ENCODE measurements at regions of chr6 and their contacts with region 1.

Region 1: DNA sequence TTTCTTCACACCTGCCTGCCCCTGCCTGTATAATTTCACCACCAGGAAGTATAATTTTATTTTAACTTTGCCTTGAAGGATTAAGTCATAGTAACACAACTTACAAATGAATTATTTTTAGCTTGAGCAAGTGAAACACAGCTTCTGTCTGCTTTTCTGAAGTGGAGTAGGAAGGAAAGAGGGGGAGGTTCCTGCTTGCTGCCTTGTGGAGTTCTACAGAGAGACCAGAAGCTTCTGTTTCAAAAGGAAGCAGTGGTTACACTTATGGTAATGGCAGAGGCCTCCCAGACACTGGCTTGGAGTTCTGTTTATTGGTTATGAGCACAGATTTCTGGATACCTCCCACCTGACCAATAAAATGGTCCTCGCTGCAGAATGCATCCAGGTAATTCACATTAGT is 159.6 kb downstream of the TMEM200A start:
- DNase-seq: no peak

Region 2: GRCh38 chr6:131038597-131039344 is 513.4 kb after region 1 on chr6:
- intact Hi-C with region 1: no loop called
- DNase-seq: no peak

Region 3: GRCh38 chr6:131348319-131348971 is 823.0 kb after region 1 on chr6:
- intact Hi-C with region 1: loop called in 1 of 2 experiments (anchors 5 kb)
- DNase-seq: no peak